ENCODE measurements at regions of chr1 and their contacts with region 1.

Region 1: GRCh38 chr1:199243423-199244061 is 604.7 kb downstream of the PTPRC start:
- DNase-seq: peak; percentile 86
- ATAC-seq: peak; percentile 100
- H3K4me3 Mint-ChIP-seq: no peak overlapping the region
- H3K27ac Mint-ChIP-seq: no peak overlapping the region
- H3K4me1 Mint-ChIP-seq: peaks cover 4% of the 10 kb centered on the region
- H3K27me3 Mint-ChIP-seq: peaks cover 6% of the 10 kb centered on the region

Region 2: DNA sequence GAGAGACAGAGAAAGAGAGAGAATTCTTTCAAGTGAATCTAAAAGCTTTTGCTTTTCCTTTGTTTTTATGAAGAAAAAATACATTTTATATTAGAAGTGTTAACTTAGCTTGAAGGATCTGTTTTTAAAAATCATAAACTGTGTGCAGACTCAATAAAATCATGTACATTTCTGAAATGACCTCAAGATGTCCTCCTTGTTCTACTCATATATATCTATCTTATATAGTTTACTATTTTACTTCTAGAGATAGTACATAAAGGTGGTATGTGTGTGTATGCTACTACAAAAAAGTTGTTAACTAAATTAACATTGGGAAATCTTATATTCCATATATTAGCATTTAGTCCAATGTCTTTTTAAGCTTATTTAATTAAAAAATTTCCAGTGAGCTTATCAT is 487.1 kb before region 1 on chr1:
- CTCF ChIA-PET with region 1: interaction called, 4 read pairs
- POLR2A ChIA-PET with region 1: no interaction called
- intact Hi-C with region 1: loop called (anchors 5 kb)
- DNase-seq: no peak
- ATAC-seq: no peak
- H3K4me3 Mint-ChIP-seq: no peak overlapping the region
- H3K27ac Mint-ChIP-seq: no peak overlapping the region
- H3K4me1 Mint-ChIP-seq: peaks cover 13% of the 10 kb centered on the region
- H3K27me3 Mint-ChIP-seq: no peaks in the 10 kb centered on the region

Region 3: GRCh38 chr1:198771563-198772153 is 471.9 kb before region 1 on chr1:
- CTCF ChIA-PET with region 1: no interaction called
- POLR2A ChIA-PET with region 1: no interaction called
- intact Hi-C with region 1: loop called (anchors 2 to 5 kb)
- DNase-seq: peak; percentile 24
- ATAC-seq: peak; percentile 70
- H3K4me3 Mint-ChIP-seq: no peak overlapping the region
- H3K27ac Mint-ChIP-seq: no peak overlapping the region
- H3K4me1 Mint-ChIP-seq: peaks cover 6% of the 10 kb centered on the region
- H3K27me3 Mint-ChIP-seq: no peaks in the 10 kb centered on the region

Region 4: DNA sequence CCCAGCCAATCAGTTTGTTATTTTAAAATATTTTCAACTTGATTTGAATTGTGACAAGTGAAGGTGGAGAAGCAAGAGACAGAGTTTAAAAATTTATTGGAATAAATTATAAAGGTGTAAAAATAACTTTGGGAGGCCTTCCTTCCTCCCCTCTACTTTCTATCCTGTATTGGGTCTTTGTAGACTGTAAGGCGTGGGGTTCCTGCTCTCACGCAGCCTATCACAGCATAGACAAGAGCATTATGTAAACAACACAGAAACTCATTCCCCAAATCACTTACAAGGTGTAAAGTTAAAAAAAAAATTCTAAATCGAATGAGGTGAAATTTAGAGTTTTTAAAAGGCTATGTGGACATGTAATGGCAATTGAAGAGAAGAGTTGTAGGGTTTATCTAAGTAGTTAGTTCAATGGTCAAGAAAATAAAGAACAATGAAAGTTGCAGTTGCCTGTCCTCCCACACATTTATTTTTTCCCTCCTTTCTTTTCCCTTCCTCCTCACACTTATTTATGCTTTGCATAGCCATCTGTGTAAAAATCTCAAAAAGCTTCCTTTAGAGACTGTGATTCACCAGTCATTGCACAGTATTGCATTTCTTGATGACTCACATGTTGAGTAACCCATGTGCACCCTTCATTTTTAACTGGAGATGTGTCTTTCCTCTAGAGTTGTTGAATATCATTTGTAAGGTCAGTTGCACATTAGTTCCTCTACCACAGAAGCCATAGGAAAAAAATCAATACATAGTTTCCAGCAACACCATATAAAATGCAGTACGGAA is 362.5 kb before region 1 on chr1:
- CTCF ChIA-PET with region 1: no interaction called
- POLR2A ChIA-PET with region 1: no interaction called
- intact Hi-C with region 1: loop called in 1 of 2 experiments (anchors 10 kb)
- DNase-seq: peak; percentile 14
- ATAC-seq: peak; percentile 93
- H3K4me3 Mint-ChIP-seq: no peak overlapping the region
- H3K27ac Mint-ChIP-seq: peak overlapping the region; percentile 86
- H3K4me1 Mint-ChIP-seq: peaks cover 28% of the 10 kb centered on the region
- H3K27me3 Mint-ChIP-seq: no peaks in the 10 kb centered on the region

Region 5: DNA sequence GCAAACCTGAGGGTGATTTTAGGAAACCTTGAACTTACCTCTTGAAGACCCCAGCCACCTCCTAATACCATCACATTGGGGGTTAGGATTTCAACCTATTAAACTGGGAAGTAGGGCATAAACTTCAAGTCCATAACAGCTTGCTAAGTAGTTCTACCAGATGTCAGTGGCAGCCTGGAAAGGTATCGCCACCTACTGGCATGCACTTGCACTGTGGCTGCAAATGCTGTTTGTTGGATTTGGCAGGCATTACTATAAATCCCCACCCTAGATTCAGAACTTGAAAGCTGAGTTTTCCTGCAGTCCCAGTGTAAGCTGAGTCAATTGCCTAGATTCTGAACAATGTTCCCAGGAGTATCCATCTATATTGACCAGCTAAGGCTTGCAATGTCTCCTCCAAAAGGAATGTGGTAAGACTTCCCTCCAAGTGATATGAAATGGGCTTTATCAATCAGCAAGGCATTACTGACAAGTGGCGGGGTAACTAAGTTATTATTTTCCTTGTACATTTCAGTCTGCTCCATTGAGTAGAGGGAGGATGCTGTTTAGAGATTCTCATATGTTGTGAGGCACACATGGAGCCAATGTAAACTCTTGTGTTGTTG is 130.2 kb before region 1 on chr1:
- CTCF ChIA-PET with region 1: interaction called, 13 read pairs
- POLR2A ChIA-PET with region 1: no interaction called
- intact Hi-C with region 1: loop called in 1 of 2 experiments (anchors 5 kb)
- DNase-seq: peak; percentile 79
- ATAC-seq: peak; percentile 70
- H3K4me3 Mint-ChIP-seq: no peak overlapping the region
- H3K27ac Mint-ChIP-seq: no peak overlapping the region
- H3K4me1 Mint-ChIP-seq: no peaks in the 10 kb centered on the region
- H3K27me3 Mint-ChIP-seq: no peaks in the 10 kb centered on the region

Region 6: GRCh38 chr1:199226163-199226562 is 17.4 kb before region 1 on chr1:
- CTCF ChIA-PET with region 1: interaction called, 10 read pairs
- POLR2A ChIA-PET with region 1: no interaction called
- intact Hi-C with region 1: no loop called
- DNase-seq: peak; percentile 53
- ATAC-seq: peak; percentile 98
- H3K4me3 Mint-ChIP-seq: peak overlapping the region; percentile 47
- H3K27ac Mint-ChIP-seq: peak overlapping the region; percentile 78
- H3K4me1 Mint-ChIP-seq: peaks cover 25% of the 10 kb centered on the region
- H3K27me3 Mint-ChIP-seq: no peaks in the 10 kb centered on the region

Region 7: DNA sequence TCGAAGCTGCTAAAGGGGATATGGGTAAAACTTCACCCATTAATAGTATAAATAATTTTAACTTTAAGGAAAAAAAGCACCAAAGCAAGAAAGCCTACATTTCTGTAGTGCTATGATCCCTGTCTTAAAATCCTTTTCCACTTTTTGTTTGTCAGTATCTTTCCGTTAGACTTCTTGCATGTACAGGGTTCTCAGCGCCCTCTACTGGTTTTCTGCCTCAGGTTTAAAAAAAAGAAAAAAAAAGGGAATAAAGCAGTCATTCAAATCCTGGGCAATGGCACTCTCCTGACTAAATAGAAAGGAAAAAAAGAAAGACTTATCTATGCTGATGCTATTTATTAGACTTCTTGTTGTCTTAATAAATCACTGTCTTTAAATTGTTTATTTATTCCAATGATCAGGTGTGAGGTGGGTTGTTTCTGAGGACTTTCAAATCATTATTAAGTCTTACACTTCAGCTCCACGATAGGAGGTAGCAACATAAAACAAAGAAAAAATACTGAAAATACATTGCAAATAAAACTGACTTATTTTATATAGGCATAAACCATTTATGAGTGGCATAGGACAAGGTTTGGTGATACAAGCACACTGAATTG is 308.5 kb after region 1 on chr1:
- CTCF ChIA-PET with region 1: no interaction called
- POLR2A ChIA-PET with region 1: no interaction called
- intact Hi-C with region 1: loop called in 1 of 2 experiments (anchors 10 kb)
- DNase-seq: peak; percentile 62
- ATAC-seq: no peak
- H3K4me3 Mint-ChIP-seq: no peak overlapping the region
- H3K27ac Mint-ChIP-seq: no peak overlapping the region
- H3K4me1 Mint-ChIP-seq: no peaks in the 10 kb centered on the region
- H3K27me3 Mint-ChIP-seq: peaks cover 8% of the 10 kb centered on the region

Region 8: DNA sequence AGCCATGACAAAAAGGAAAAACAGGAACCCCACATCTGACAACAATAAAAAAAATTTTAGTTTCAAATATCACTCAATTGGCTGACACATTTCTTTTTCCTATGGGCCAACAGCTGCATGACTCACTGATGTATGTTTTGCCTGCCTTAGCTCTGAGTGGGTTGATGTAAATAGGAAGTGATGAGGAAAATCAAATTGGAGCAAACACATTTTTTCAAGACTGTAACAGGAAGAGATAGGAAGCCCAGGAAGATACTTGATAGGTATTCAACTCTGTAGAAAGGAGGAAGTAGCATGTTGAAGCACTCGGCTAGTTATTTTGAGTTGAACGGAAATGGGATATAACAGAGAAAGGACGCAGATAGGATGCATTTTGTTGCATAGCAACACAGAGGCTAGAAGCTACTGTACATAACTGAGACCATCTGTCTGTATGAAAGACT is 616.0 kb after region 1 on chr1:
- CTCF ChIA-PET with region 1: no interaction called
- POLR2A ChIA-PET with region 1: no interaction called
- intact Hi-C with region 1: no loop called
- DNase-seq: no peak
- ATAC-seq: peak; percentile 49
- H3K4me3 Mint-ChIP-seq: no peak overlapping the region
- H3K27ac Mint-ChIP-seq: no peak overlapping the region
- H3K4me1 Mint-ChIP-seq: peaks cover 8% of the 10 kb centered on the region
- H3K27me3 Mint-ChIP-seq: peaks cover 11% of the 10 kb centered on the region

Measured in activated CD4-positive, alpha-beta T cell treated with anti-CD3 and anti-CD28 coated beads for 36 hours (primary cell).